IMR-90 (cell line): ENCODE measurements at regions of chr19 and their contacts with region 1.

Region 1: GRCh38 chr19:10269333-10270179 is 1.4 kb upstream of the ICAM1 start:
- DNase-seq: peak; percentile 65
- ATAC-seq: peak; percentile 89
- H3K4me3 ChIP-seq: no peak overlapping the region
- H3K27ac ChIP-seq: no peak overlapping the region
- H3K4me1 ChIP-seq: peaks cover 3% of the 10 kb centered on the region; the same call in 1 of the 2 replicates
- H3K27me3 ChIP-seq: no peaks in the 10 kb centered on the region; the same call in 1 of the 2 replicates
- CTCF ChIP-seq: peak; percentile 97
- POLR2A ChIP-seq: no peak
- RAD21 ChIP-seq: peak; percentile 97

Region 2: DNA sequence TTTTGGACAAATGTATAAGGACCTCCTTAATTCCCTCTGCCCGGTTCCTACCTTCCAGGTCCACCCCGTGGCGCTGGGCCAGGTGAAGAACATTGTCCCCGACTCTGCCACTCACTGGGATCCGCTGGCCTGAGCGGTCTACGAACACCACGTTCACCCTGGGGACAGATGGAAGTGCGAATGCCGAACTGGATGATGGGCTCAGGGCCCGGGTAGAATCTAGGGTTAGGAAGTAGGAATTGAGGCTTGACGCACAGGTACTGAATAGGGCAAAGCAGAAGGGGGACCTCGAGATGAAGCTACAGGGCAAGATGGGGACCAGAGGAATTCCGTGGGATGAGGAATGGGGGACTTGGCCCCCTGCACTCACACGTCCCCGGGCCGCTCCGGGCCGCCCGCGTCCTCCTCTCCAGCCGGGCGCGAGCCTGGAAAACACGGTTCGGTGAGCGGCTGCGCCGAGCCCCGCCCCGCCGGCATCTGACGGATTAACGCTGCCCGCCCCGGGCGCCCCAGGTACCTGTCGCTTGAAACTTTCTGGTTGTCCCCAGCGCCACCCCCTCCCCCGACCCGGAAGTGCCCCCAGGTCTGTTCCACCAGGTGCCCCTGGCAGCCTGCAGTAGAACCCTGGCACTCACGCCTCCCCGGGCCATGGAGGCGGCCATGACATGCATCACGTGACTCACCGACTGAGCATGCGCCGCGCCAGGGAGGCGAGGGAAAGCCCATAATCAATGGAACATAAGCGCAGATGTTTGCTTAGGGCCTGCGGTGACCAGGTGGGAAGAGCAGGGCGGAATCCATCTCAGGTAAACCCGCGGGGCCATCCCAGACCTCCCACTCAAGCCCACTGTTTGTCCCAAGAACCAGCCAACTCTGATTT is 46.0 kb after region 1 on chr19 and contains the start of gene FDX2:
- CTCF ChIA-PET with region 1: no interaction called
- POLR2A ChIA-PET with region 1: no interaction called
- dilution Hi-C with region 1: no loop called
- in situ Hi-C with region 1: no loop called
- intact Hi-C with region 1: loop called (anchors 1 kb)
- DNase-seq: peak; percentile 67
- ATAC-seq: peak; percentile 93
- H3K4me3 ChIP-seq: peak within 1 kb of the TSS; percentile 58
- H3K27ac ChIP-seq: peak within 1 kb of the TSS; percentile 45
- H3K4me1 ChIP-seq: no peaks in the 10 kb centered on the region
- H3K27me3 ChIP-seq: no peaks in the 10 kb centered on the region
- CTCF ChIP-seq: no peak
- POLR2A ChIP-seq: no peak
- RAD21 ChIP-seq: no peak
- total RNA-seq, gene FDX2: 39.8 and 40.8 TPM in 2 replicates

Region 3: DNA sequence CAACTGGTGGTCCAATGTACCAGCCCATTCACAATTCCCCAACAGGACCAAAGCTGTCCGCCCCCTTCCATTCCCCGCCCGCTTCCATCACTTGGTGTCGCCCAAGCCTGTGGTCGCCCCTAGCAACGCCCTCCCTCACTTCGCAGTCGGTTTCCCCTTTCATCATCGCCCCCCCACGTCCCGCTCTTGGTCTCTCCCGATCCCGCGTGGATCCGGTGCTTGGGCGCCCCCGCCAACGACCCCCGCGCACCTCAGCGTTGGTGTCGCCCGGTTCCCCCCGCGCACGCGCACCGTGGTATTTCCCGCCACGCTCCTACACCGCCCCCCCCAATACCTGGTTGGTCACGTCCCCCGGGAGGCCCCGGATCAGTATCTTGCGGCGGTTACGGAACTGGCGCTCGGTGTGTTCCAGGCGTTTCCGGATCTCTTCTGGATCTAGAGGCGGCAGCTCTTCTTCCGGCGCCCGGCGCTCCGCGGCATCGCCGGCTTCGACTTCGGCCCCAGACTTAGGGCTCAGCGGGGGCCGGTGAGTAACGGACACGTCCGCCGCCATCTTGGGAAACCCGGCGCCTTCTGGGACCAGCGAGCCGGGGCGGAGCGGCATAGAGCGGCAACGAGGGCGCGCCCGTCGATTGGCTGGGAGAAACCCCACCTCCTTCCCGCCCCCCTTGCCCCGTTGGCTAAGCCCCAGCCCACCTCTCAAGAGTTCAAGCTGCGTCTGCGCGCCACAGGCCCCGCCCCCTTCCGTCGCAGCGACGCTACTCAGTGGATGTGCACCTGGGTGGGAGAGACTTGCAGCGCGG is 63.6 kb after region 1 on chr19 and contains the start of gene RAVER1:
- CTCF ChIA-PET with region 1: no interaction called
- POLR2A ChIA-PET with region 1: no interaction called
- dilution Hi-C with region 1: no loop called
- in situ Hi-C with region 1: no loop called
- intact Hi-C with region 1: loop called (anchors 2 kb)
- DNase-seq: peak; percentile 97
- ATAC-seq: peak; percentile 89
- H3K4me3 ChIP-seq: peak within 1 kb of the TSS; percentile 75
- H3K27ac ChIP-seq: peak within 1 kb of the TSS; percentile 86
- H3K4me1 ChIP-seq: peaks cover 5% of the 10 kb centered on the region; the same call in 1 of the 2 replicates
- H3K27me3 ChIP-seq: no peaks in the 10 kb centered on the region
- CTCF ChIP-seq: no peak
- POLR2A ChIP-seq: peak; percentile 96
- RAD21 ChIP-seq: no peak
- total RNA-seq, gene RAVER1: 2.5 and 2.7 TPM in 2 replicates

Region 4: DNA sequence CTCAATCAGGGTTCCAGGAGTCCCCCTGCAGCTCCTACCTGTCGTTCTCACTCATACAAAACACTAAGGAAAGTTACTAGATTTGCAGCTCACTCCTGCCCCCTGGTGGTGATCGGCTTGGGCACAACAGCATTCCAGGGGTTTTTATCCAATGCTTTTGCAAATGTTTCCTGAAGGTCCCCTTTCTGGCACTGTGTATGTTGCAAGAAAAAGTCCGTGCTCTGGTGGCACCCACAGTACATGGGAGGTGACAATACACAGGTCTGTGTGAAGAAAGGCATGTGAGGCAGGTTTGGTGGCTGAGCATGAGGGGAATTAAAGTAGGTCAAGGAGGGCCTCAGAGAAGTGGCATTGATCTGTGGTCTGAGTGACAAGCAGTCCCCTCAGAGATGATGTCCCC is 119.4 kb after region 1 on chr19:
- CTCF ChIA-PET with region 1: interaction called, 12 read pairs
- POLR2A ChIA-PET with region 1: no interaction called
- dilution Hi-C with region 1: no loop called
- in situ Hi-C with region 1: loop called (anchors 5 kb)
- intact Hi-C with region 1: loop called (anchors 1 kb)
- DNase-seq: peak; percentile 71
- ATAC-seq: peak; percentile 76
- H3K4me3 ChIP-seq: no peak overlapping the region
- H3K27ac ChIP-seq: no peak overlapping the region
- H3K4me1 ChIP-seq: no peaks in the 10 kb centered on the region
- H3K27me3 ChIP-seq: no peaks in the 10 kb centered on the region
- CTCF ChIP-seq: peak; percentile 86
- POLR2A ChIP-seq: no peak
- RAD21 ChIP-seq: peak; percentile 74

Region 5: GRCh38 chr19:10551698-10552301 is 282.2 kb after region 1 on chr19:
- CTCF ChIA-PET with region 1: no interaction called
- POLR2A ChIA-PET with region 1: no interaction called
- dilution Hi-C with region 1: no loop called
- in situ Hi-C with region 1: no loop called
- intact Hi-C with region 1: no loop called
- DNase-seq: no peak
- ATAC-seq: 0 out of 2 replicates have a peak, but pooled peaks have one; percentile 22
- H3K4me3 ChIP-seq: no peak overlapping the region
- H3K27ac ChIP-seq: no peak overlapping the region
- H3K4me1 ChIP-seq: no peaks in the 10 kb centered on the region
- H3K27me3 ChIP-seq: no peaks in the 10 kb centered on the region
- CTCF ChIP-seq: peak; percentile 25; the same call in 1 of the 2 replicates
- POLR2A ChIP-seq: no peak
- RAD21 ChIP-seq: peak; percentile 29; the same call in 1 of the 2 replicates